ENCODE measurements at regions of chr19 and their contacts with region 1.

Region 1: DNA sequence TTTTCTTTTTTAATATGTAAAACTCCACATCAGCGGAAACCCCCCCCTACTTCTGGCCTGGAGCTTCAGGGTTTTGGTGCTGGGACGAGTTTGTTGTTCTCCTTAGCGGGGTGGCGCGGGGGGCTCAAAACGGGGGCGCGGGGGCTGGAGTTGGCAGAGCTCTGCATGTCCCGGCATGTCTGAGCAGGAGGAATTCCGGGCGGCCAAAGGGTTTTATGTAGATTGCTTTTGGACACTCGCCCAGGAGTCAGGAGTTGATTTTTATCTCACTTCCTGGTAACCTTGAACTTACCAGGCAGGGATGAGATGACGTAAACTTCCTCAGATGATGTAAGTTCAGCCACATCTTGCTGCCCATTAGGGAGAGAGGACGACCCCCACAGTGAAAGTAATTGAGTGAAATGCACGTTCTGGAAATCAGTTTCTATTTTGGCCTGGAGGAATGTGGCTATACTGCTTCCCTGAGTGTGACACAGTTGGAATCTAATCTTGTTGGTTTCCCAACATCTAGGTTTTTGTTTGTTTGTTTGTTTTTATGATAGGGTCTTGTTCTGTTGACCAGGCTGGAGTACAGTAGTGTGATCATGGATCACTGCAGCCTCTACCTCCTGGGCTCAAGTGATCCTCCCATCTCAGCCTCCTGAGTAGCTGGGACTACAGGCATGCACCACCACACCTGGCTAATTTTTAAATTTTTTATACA is 21.0 kb upstream of the GDF15 start:
- DNase-seq: peak; percentile 98
- H3K4me3 ChIP-seq: no peak overlapping the region
- H3K27ac ChIP-seq: peak overlapping the region; percentile 91
- H3K4me1 ChIP-seq: peaks cover 28% of the 10 kb centered on the region
- H3K27me3 ChIP-seq: no peaks in the 10 kb centered on the region
- CTCF ChIP-seq: no peak
- POLR2A ChIP-seq: peak; percentile 47

Region 2: GRCh38 chr19:18419195-18419698 is 54.3 kb after region 1 on chr19 and contains the start of gene SSBP4:
- CTCF ChIA-PET with region 1: no interaction called
- POLR2A ChIA-PET with region 1: no interaction called
- dilution Hi-C with region 1: no loop called
- intact Hi-C with region 1: loop called (anchors 2 kb)
- DNase-seq: peak; percentile 76
- H3K4me3 ChIP-seq: peak within 1 kb of the TSS; percentile 50 to 73 (median 53)
- H3K27ac ChIP-seq: peak within 1 kb of the TSS; percentile 54
- H3K4me1 ChIP-seq: peaks cover 46% of the 10 kb centered on the region
- H3K27me3 ChIP-seq: no peaks in the 10 kb centered on the region
- CTCF ChIP-seq: peak; percentile 19 to 31
- POLR2A ChIP-seq: peak; percentile 49
- total RNA-seq, gene SSBP4: 140 and 151 TPM in 2 replicates